Ovary (tissue), 10 donors: ENCODE measurements at regions of chr3 and their contacts with region 1.

Region 1: DNA sequence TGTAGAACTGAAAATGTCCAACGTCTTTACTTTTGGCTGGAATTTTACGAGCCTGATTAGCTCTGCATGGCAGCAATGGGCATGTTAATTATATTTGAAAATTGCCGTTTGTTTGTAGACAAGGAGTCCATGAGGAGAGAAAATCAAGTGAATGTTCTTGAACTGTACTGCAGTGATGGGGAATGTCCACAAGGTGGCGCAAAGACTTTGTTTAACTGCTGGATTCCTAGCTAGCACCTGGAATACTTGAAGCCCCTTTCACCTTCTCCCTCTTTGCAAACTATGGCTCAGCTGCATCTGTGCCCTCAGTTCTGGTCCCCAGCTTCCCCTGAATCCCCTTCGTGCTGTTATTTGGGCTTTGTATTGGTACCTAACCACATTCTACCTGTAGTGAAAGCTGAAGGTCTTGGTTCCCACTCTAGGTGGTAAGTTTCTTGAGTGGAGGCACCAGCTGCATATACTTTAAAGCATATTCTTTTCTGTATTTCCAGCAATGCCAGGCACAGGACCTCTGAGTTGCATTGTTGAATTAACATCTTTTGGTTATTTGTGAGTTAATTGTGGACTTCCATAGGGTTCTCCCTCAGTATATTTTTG is 25.3 kb downstream of the EXOG start:
- DNase-seq: peak; percentile 51 to 73 (median 60)
- H3K4me3 ChIP-seq: no peak overlapping the region
- H3K27ac ChIP-seq: no peak overlapping the region
- H3K4me1 ChIP-seq: no peaks in the 10 kb centered on the region
- H3K27me3 ChIP-seq: no peaks in the 10 kb centered on the region
- CTCF ChIP-seq: peak; percentile 66 to 86 (median 76)
- EP300 ChIP-seq: no peak
- POLR2A ChIP-seq: no peak

Region 2: DNA sequence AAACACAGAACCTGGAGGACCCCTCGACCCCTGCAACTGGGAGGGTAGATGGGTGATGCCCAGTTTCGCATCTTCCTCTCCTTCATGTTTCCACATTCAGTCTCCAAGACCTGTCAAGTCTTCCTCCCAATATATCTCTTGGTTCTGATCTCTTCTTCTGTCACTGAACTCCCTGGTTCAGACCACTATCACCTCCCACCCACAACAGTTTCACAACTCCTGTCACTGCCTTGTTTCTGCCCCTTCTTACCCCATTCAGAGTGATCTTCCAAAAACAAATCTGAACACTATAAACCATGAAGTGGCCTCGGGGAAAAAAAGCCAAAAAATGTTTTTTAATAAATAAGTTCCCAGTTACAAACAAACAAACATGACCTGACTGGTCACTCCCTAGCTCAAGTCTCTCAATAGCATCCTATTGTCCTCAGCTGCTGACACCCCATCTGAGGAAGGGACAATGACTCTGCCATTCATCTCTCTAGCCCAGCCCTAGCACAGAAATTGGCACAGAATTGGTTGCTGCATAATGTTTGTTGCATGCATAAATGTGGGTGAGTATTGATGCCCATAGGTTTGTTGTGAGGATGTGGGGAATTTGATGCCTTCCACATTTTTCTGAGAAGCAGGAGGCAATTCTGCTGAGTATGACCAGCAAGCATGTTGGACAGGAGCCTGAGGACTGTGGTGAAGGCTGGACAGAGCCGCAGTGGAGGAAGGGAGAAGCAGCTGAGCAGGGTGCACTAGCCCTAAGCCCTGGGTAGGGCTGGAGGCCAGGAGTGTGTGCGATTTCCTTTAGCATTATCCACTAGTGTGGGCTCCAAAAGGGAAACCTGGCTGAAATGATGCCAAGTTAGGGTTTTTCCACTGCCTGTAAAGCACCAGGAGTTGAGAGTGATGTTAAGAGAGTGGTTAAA is 187.1 kb before region 1 on chr3:
- intact Hi-C with region 1: no loop called
- DNase-seq: no peak
- H3K4me3 ChIP-seq: no peak overlapping the region
- H3K27ac ChIP-seq: no peak overlapping the region
- H3K4me1 ChIP-seq: no peaks in the 10 kb centered on the region
- H3K27me3 ChIP-seq: no peaks in the 10 kb centered on the region
- CTCF ChIP-seq: no peak
- EP300 ChIP-seq: no peak
- POLR2A ChIP-seq: no peak

Region 3: GRCh38 chr3:38651154-38651789 is 129.8 kb after region 1 on chr3:
- intact Hi-C with region 1: loop called in 3 of 4 experiments (anchors 2 to 10 kb)
- DNase-seq: peak; percentile 53 to 75 (median 63)
- H3K4me3 ChIP-seq: no peak overlapping the region
- H3K27ac ChIP-seq: no peak overlapping the region
- H3K4me1 ChIP-seq: peaks cover 7% of the 10 kb centered on the region
- H3K27me3 ChIP-seq: no peaks in the 10 kb centered on the region
- CTCF ChIP-seq: peak; percentile 36 to 79 (median 57)
- EP300 ChIP-seq: no peak
- POLR2A ChIP-seq: no peak

Region 4: DNA sequence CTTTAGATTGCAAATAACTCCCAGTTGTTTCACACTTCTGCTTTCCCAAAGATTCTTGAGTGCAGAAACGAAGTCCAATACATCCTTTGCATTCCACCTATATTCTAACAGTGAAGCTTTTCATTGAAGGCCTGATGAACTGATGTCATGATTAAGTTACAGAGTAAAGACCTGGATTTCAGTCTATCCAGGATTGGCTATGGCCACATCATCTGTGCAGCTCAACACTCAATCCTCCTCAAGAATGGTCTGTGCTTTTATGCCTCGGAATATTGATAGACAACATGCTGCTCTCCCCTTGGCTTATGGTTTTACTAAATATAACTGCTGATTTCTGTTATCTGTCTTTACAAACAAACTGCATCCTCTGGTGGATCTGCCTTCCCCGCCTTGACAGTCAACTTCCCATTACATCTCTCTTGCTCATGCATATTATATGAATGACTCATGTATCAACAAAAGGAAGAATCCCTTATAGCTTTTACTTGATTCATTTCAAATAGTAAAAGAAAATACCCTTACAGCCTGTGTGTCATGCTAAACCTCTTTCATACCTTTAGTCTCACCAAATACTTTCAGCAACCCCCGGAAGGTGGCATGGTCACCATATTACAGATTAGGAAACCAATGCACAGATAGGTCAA is 470.8 kb after region 1 on chr3:
- intact Hi-C with region 1: loop called in 1 of 4 experiments (anchors 10 kb)
- DNase-seq: no peak
- H3K4me3 ChIP-seq: no peak overlapping the region
- H3K27ac ChIP-seq: no peak overlapping the region
- H3K4me1 ChIP-seq: no peaks in the 10 kb centered on the region
- H3K27me3 ChIP-seq: no peaks in the 10 kb centered on the region
- CTCF ChIP-seq: no peak
- EP300 ChIP-seq: no peak
- POLR2A ChIP-seq: no peak

Region 5: DNA sequence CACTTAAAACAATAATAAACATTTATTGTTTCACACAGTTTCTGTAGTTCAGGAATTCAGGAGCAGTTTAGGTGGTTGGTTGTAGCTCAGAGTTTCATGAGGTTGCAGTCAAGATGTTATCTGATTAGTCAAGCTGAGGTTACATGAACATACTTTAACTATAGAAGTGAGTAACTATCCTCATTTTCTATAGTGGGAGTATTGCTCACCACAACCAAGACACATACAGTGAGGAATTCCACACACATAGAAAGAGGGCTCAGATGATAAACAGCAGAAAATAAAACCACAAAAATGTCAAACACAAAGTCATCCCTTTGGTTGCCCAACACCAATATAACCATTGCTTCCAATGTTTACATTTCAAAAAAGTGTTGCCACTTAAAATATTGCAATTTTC is 516.7 kb after region 1 on chr3:
- intact Hi-C with region 1: loop called in 1 of 4 experiments (anchors 10 kb)
- DNase-seq: no peak
- H3K4me3 ChIP-seq: no peak overlapping the region
- H3K27ac ChIP-seq: no peak overlapping the region
- H3K4me1 ChIP-seq: no peaks in the 10 kb centered on the region
- H3K27me3 ChIP-seq: no peaks in the 10 kb centered on the region
- CTCF ChIP-seq: no peak
- EP300 ChIP-seq: no peak
- POLR2A ChIP-seq: no peak